K562 (cell line): ENCODE measurements at regions of chr3 and their contacts with region 1.

Region 1: GRCh38 chr3:66998113-66998903 is at the start of gene KBTBD8:
- DNase-seq: peak in 3 of 4 experiments; percentile 97 to 98 (median 97)
- ATAC-seq: peak; percentile 98
- H3K4me3 ChIP-seq: peak within 1 kb of the TSS; percentile 76
- H3K27ac ChIP-seq: peak within 1 kb of the TSS; percentile 79
- H3K4me1 ChIP-seq: peaks cover 4 to 8% of the 10 kb centered on the region in 2 experiments; a peak in 3 of 5 replicates
- H3K27me3 ChIP-seq: no peaks in the 10 kb centered on the region
- CTCF ChIP-seq: no peak
- EP300 ChIP-seq: no peak
- POLR2A ChIP-seq: peak; percentile 76
- RAD21 ChIP-seq: no peak
- polyA plus RNA-seq, gene KBTBD8: 2.8 to 3.7 TPM

Region 2: GRCh38 chr3:66418475-66418931 is 579.8 kb before region 1 on chr3:
- CTCF ChIA-PET with region 1: no interaction called
- POLR2A ChIA-PET with region 1: no interaction called
- in situ Hi-C with region 1: no loop called
- intact Hi-C with region 1: no loop called
- DNase-seq: no peak
- ATAC-seq: no peak
- H3K4me3 ChIP-seq: no peak overlapping the region
- H3K27ac ChIP-seq: no peak overlapping the region
- H3K4me1 ChIP-seq: no peaks in the 10 kb centered on the region
- H3K27me3 ChIP-seq: peaks cover 0 to 26% of the 10 kb centered on the region in 2 experiments; a peak in 3 of 5 replicates
- CTCF ChIP-seq: no peak
- EP300 ChIP-seq: no peak
- POLR2A ChIP-seq: no peak
- RAD21 ChIP-seq: no peak

Region 3: DNA sequence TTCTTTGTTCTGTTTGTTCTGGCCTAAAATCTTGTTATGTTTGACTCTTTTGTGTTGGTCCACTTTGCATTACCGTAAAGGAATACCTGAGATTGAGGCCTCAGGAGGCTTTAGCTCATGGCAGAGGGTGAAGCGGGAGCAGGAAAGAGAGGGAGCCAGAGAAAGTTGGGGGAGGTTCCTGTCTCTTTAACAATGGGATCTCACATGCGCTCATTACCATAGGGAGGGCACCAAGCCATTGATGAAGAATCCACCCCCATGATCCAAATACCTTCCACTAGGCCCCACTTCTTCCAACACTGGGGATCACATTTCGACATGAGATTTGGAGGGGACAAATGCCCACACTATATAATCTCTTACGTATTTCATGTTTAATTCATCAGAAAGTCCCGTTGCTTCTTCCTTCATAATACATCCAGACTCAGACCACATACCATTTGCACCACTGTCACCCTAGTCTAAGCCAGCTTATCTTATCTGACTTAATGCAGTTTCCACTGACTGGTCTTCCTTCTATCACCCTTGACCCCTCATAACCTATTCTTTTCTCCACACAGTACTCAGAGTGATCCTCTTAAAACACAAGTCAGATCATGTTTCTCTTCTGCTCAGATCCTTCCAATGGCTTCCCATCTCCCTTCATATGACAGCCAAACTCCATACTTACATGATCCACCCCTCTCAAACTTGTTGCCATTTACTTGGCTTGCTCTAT is 13.3 kb after region 1 on chr3:
- CTCF ChIA-PET with region 1: no interaction called
- POLR2A ChIA-PET with region 1: interaction called, 4 read pairs
- in situ Hi-C with region 1: no loop called
- intact Hi-C with region 1: loop called (anchors 1 kb)
- DNase-seq: peak; percentile 32 to 71 (median 49)
- ATAC-seq: peak; percentile 86
- H3K4me3 ChIP-seq: no peak overlapping the region
- H3K27ac ChIP-seq: peak overlapping the region; percentile 42
- H3K4me1 ChIP-seq: peaks cover 11 to 27% of the 10 kb centered on the region in 2 experiments
- H3K27me3 ChIP-seq: no peaks in the 10 kb centered on the region
- CTCF ChIP-seq: no peak
- EP300 ChIP-seq: peak; percentile 63
- POLR2A ChIP-seq: no peak
- RAD21 ChIP-seq: no peak

Region 4: DNA sequence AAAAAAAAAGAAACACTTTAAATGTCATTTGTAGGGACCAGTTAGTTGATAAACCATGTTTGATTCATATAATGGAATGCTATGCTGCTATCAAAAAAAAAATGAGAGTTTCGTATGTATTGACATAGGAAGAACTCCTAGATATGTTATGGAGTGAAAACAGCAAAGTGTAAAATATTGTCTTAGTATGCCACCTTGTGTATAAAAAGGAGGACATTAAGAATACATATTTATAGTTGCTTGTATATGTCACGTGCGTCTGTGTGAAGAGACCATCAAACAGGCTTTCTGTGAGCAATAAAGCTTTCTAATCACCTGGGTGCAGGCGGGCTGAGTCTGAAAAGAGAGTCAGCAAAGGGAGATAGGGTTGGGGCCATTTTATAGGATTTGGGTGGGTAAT is 39.3 kb after region 1 on chr3:
- CTCF ChIA-PET with region 1: no interaction called
- POLR2A ChIA-PET with region 1: no interaction called
- in situ Hi-C with region 1: no loop called
- intact Hi-C with region 1: no loop called
- DNase-seq: peak in 1 of 4 experiments; percentile 33
- ATAC-seq: peak; percentile 89
- H3K4me3 ChIP-seq: no peak overlapping the region
- H3K27ac ChIP-seq: no peak overlapping the region
- H3K4me1 ChIP-seq: peaks cover 0 to 8% of the 10 kb centered on the region in 2 experiments; a peak in 4 of 5 replicates
- H3K27me3 ChIP-seq: no peaks in the 10 kb centered on the region
- CTCF ChIP-seq: peak in 1 of 3 experiments; percentile 58; a peak in 2 of 6 replicates
- EP300 ChIP-seq: no peak
- POLR2A ChIP-seq: no peak
- RAD21 ChIP-seq: peak; percentile 80 to 85

Region 5: DNA sequence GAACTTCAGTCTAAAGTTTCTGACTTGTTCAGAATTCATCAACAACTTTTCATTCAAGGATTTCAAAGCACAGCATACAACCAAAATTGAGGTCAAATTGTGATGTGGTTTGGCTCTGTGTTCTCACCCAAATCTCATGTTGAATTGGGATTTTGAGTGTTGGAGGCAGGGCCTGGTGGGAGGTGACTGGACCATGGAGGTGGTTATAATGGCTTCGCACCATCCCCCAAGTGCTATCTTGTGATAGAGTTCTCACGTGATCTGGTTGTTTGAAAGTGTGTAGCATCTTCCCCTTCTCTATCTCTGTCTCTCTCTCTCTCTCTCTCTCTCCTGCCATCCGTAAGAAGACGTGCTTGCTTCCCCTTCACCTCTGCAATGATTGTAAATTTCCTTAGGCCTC is 675.7 kb after region 1 on chr3:
- CTCF ChIA-PET with region 1: no interaction called
- POLR2A ChIA-PET with region 1: no interaction called
- in situ Hi-C with region 1: no loop called
- intact Hi-C with region 1: no loop called
- DNase-seq: no peak
- ATAC-seq: no peak
- H3K4me3 ChIP-seq: no peak overlapping the region
- H3K27ac ChIP-seq: no peak overlapping the region
- H3K4me1 ChIP-seq: no peaks in the 10 kb centered on the region
- H3K27me3 ChIP-seq: no peaks in the 10 kb centered on the region
- CTCF ChIP-seq: no peak
- EP300 ChIP-seq: no peak
- POLR2A ChIP-seq: no peak
- RAD21 ChIP-seq: no peak